ENCODE measurements at regions of chr14 and their contacts with region 1.

Region 1: DNA sequence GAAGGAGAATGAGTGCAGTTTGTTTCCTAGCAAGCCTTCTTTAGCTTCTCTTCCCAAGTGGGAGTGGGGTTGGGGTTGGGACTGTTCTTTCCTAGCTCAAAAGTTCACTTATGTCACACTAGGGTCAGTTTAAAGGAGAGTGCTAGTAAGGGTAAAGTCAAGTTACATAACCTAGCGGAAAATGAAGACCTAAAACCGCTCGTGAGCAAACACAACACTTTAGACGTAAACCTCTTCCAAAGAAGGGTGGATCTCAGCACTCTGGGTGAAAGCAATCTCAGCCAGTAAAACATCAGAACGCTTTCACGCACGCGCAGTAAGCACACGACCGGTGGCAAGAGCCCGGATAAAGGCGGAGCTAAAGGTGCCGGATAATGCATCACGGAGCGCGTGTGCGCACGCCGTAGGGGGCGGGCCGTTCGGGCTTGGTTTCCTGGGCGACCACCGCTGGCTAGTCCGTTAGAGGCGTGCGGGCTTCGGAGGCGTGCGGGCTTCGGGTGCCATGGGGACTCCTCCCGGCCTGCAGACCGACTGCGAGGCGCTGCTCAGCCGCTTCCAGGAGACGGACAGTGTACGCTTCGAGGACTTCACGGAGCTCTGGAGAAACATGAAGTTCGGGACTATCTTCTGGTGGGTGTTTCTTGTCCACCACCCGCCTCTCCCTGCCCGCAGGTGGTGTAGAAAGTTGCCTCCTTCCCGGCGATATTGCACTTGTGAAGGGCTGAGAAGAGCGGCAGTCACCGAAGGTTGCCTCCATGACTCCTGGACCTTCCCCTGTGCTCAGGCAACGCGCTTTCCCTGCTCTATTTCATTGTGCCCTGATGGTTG is at the start of gene SNAPC1:
- DNase-seq: peak; percentile 98
- H3K4me3 ChIP-seq: peak within 1 kb of the TSS; percentile 63 to 86 (median 83)
- H3K27ac ChIP-seq: peak within 1 kb of the TSS; percentile 66
- H3K4me1 ChIP-seq: peaks cover 29% of the 10 kb centered on the region
- H3K27me3 ChIP-seq: no peaks in the 10 kb centered on the region
- CTCF ChIP-seq: no peak
- POLR2A ChIP-seq: peak; percentile 89
- total RNA-seq, gene SNAPC1: 12.7 and 21.8 TPM in 2 replicates

Region 2: DNA sequence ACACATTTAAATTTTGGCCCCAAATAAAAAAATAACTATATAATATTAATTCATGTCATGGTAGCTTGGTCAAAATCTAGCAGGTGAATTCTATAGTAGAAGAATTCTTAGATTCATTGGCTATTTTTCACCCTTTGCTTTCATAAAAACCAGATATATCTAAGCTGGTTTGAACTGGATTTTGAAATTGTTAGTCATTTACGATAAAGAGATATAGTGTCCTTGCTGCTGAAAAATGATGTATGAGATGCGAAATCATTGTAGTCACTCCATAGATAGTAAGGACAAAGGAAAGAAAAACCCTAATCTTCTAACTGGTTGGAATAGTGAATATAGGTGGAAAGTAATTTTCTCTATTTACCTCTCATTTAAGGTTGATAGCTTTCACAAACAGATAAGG is 79.1 kb before region 1 on chr14:
- CTCF ChIA-PET with region 1: no interaction called
- POLR2A ChIA-PET with region 1: no interaction called
- dilution Hi-C with region 1: no loop called
- intact Hi-C with region 1: no loop called
- DNase-seq: no peak
- H3K4me3 ChIP-seq: no peak overlapping the region
- H3K27ac ChIP-seq: no peak overlapping the region
- H3K4me1 ChIP-seq: no peaks in the 10 kb centered on the region
- H3K27me3 ChIP-seq: no peaks in the 10 kb centered on the region
- CTCF ChIP-seq: no peak
- POLR2A ChIP-seq: no peak

Region 3: GRCh38 chr14:61750708-61751474 is 11.3 kb before region 1 on chr14:
- CTCF ChIA-PET with region 1: interaction called, 24 read pairs
- POLR2A ChIA-PET with region 1: interaction called, 17 read pairs
- dilution Hi-C with region 1: no loop called
- intact Hi-C with region 1: no loop called
- DNase-seq: peak; percentile 82
- H3K4me3 ChIP-seq: peak overlapping the region; percentile 46 to 81 (median 72)
- H3K27ac ChIP-seq: peak overlapping the region; percentile 60
- H3K4me1 ChIP-seq: peaks cover 41% of the 10 kb centered on the region
- H3K27me3 ChIP-seq: no peaks in the 10 kb centered on the region
- CTCF ChIP-seq: no peak
- POLR2A ChIP-seq: peak; percentile 77